ENCODE measurements at regions of chr3 and their contacts with region 1.

Region 1: DNA sequence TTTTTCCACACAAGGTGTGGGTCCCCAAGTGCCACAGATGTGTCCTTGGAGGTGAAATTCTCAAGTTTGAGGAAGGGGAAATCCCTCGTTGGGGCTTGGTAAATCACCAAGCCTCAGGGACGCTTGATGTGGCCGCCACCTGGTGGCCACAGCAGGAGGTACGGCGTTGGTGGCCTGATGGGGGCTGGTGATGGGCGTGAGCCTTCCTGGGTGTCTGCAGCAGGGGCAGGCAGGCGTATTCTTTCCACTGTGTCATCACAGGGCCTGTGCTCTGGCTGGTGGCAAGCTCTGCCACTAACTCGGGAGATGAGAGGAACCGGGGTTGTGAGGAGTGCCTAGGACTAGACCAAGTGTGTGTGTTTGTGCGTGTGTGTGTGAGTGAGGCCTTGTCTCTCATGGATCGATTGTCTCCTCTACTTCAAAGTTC is 4.2 kb downstream of the ACOX2 start:
- DNase-seq: peak; percentile 55
- ATAC-seq: peak; percentile 61
- H3K4me3 ChIP-seq: no peak overlapping the region
- H3K27ac ChIP-seq: peak overlapping the region; percentile 33
- H3K4me1 ChIP-seq: peaks cover 58% of the 10 kb centered on the region
- H3K27me3 ChIP-seq: no peaks in the 10 kb centered on the region
- CTCF ChIP-seq: peak; percentile 97
- EP300 ChIP-seq: 0 out of 4 replicates have a peak, but pooled peaks of 1 of the 2 experiments have one; percentile 11
- POLR2A ChIP-seq: no peak
- RAD21 ChIP-seq: peak; percentile 89

Region 2: DNA sequence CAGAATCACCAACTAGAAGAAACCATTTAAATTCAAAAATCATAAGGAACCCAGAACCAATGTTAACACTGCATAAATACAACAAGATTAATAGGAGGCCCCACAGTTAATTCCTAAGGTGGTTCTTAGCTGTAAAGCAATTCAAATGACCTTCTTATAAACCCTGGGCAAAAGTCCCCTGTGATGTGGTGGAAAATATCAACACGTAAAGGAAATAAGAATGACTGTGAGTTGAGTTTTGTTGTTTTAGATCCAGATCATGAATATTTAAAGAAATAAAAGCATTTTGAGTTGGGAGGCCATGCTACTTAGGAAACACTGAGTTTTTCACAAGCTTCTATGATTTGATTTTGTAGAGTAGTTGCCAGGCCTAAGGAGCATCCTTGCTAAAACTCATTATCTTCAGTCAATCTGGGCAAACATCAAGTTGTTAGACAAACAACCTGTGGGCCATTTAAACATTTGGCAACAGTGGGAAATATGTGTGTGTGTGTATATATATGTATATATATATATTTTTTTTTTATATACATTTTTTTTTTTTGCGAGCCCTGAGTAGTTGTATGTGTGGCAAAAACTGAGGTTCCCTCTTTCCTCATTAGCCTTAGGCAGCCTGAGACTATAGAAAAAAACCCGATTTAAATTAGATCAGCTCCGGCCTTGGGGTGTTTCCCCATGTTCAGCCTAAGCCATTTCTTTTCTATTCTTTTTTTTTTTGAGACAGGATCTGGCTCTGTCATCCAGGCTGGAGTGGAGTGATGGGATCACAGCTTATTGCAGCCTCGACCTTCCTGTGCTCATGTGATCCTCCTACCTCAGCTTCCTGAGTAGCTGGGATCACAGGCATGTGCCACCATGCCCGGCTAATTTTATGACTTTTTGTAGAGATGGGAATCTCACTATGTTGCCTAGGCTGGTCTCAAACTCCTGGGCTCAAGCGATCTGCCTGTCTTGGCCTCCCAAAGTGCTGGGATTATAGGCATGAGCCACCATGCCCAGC is 208.1 kb before region 1 on chr3:
- CTCF ChIA-PET with region 1: no interaction called
- POLR2A ChIA-PET with region 1: interaction called, 3 read pairs
- in situ Hi-C with region 1: loop called (anchors 10 kb)
- intact Hi-C with region 1: no loop called
- DNase-seq: no peak
- ATAC-seq: no peak
- H3K4me3 ChIP-seq: peak overlapping the region in 1 of 3 experiments; percentile 26; a peak in 1 of 6 replicates
- H3K27ac ChIP-seq: no peak overlapping the region
- H3K4me1 ChIP-seq: peaks cover 54% of the 10 kb centered on the region
- H3K27me3 ChIP-seq: no peaks in the 10 kb centered on the region
- CTCF ChIP-seq: no peak
- EP300 ChIP-seq: no peak
- POLR2A ChIP-seq: no peak
- RAD21 ChIP-seq: no peak

Region 3: GRCh38 chr3:58419780-58420507 is 112.9 kb before region 1 on chr3:
- CTCF ChIA-PET with region 1: interaction called, 11 read pairs
- POLR2A ChIA-PET with region 1: interaction called, 7 read pairs
- in situ Hi-C with region 1: no loop called
- intact Hi-C with region 1: loop called (anchors 5 kb)
- DNase-seq: no peak
- ATAC-seq: no peak
- H3K4me3 ChIP-seq: no peak overlapping the region
- H3K27ac ChIP-seq: no peak overlapping the region
- H3K4me1 ChIP-seq: peaks cover 36% of the 10 kb centered on the region
- H3K27me3 ChIP-seq: no peaks in the 10 kb centered on the region
- CTCF ChIP-seq: no peak
- EP300 ChIP-seq: no peak
- POLR2A ChIP-seq: no peak
- RAD21 ChIP-seq: no peak

Region 4: GRCh38 chr3:58471025-58471887 is 61.6 kb before region 1 on chr3:
- CTCF ChIA-PET with region 1: no interaction called
- POLR2A ChIA-PET with region 1: interaction called, 15 read pairs
- in situ Hi-C with region 1: no loop called
- intact Hi-C with region 1: no loop called
- DNase-seq: peak; percentile 95
- ATAC-seq: peak; percentile 91
- H3K4me3 ChIP-seq: peak overlapping the region; percentile 8 to 58 (median 33); a peak in 3 of 6 replicates
- H3K27ac ChIP-seq: peak overlapping the region; percentile 84
- H3K4me1 ChIP-seq: peaks cover 73% of the 10 kb centered on the region
- H3K27me3 ChIP-seq: no peaks in the 10 kb centered on the region
- CTCF ChIP-seq: no peak
- EP300 ChIP-seq: peak; percentile 81 to 92
- POLR2A ChIP-seq: peak in 1 of 2 experiments; percentile 60; a peak in 2 of 4 replicates
- RAD21 ChIP-seq: no peak; the same call in 1 of the 2 replicates

Region 5: GRCh38 chr3:58520403-58521335 is 12.1 kb before region 1 on chr3:
- CTCF ChIA-PET with region 1: interaction called, 5 read pairs
- POLR2A ChIA-PET with region 1: interaction called, 55 read pairs
- in situ Hi-C with region 1: no loop called
- intact Hi-C with region 1: no loop called
- DNase-seq: peak; percentile 81
- ATAC-seq: peak; percentile 78
- H3K4me3 ChIP-seq: peak overlapping the region in 2 of 3 experiments; percentile 15 to 17; a peak in 2 of 6 replicates
- H3K27ac ChIP-seq: peak overlapping the region; percentile 88
- H3K4me1 ChIP-seq: peaks cover 91% of the 10 kb centered on the region
- H3K27me3 ChIP-seq: no peaks in the 10 kb centered on the region
- CTCF ChIP-seq: peak; percentile 73
- EP300 ChIP-seq: 0 out of 4 replicates have a peak, but pooled peaks of 1 of the 2 experiments have one; percentile 42
- POLR2A ChIP-seq: peak in 1 of 2 experiments; percentile 22; a peak in 1 of 4 replicates
- RAD21 ChIP-seq: peak; percentile 58

Region 6: GRCh38 chr3:58560771-58561311 is 28.0 kb after region 1 on chr3:
- CTCF ChIA-PET with region 1: no interaction called
- POLR2A ChIA-PET with region 1: interaction called, 76 read pairs
- in situ Hi-C with region 1: no loop called
- intact Hi-C with region 1: loop called (anchors 2 kb)
- DNase-seq: peak; percentile 76
- ATAC-seq: peak; percentile 70
- H3K4me3 ChIP-seq: no peak overlapping the region
- H3K27ac ChIP-seq: no peak overlapping the region
- H3K4me1 ChIP-seq: peaks cover 69% of the 10 kb centered on the region
- H3K27me3 ChIP-seq: no peaks in the 10 kb centered on the region
- CTCF ChIP-seq: peak; percentile 69
- EP300 ChIP-seq: no peak
- POLR2A ChIP-seq: no peak
- RAD21 ChIP-seq: 0 out of 2 replicates have a peak, but pooled peaks have one; percentile 18

Region 7: GRCh38 chr3:58798312-58798711 is 265.5 kb after region 1 on chr3:
- CTCF ChIA-PET with region 1: no interaction called
- POLR2A ChIA-PET with region 1: no interaction called
- in situ Hi-C with region 1: no loop called
- intact Hi-C with region 1: no loop called
- DNase-seq: no peak
- ATAC-seq: no peak
- H3K4me3 ChIP-seq: no peak overlapping the region
- H3K27ac ChIP-seq: no peak overlapping the region
- H3K4me1 ChIP-seq: peaks cover 12% of the 10 kb centered on the region; the same call in 1 of the 2 replicates
- H3K27me3 ChIP-seq: peaks cover 0 to 1% of the 10 kb centered on the region in 2 experiments; a peak in 1 of 5 replicates
- CTCF ChIP-seq: no peak
- EP300 ChIP-seq: no peak
- POLR2A ChIP-seq: no peak
- RAD21 ChIP-seq: no peak

Measured in HepG2 (cell line).